GM23248 (cell line): ENCODE measurements at regions of chr2 and their contacts with region 1.

Region 1: DNA sequence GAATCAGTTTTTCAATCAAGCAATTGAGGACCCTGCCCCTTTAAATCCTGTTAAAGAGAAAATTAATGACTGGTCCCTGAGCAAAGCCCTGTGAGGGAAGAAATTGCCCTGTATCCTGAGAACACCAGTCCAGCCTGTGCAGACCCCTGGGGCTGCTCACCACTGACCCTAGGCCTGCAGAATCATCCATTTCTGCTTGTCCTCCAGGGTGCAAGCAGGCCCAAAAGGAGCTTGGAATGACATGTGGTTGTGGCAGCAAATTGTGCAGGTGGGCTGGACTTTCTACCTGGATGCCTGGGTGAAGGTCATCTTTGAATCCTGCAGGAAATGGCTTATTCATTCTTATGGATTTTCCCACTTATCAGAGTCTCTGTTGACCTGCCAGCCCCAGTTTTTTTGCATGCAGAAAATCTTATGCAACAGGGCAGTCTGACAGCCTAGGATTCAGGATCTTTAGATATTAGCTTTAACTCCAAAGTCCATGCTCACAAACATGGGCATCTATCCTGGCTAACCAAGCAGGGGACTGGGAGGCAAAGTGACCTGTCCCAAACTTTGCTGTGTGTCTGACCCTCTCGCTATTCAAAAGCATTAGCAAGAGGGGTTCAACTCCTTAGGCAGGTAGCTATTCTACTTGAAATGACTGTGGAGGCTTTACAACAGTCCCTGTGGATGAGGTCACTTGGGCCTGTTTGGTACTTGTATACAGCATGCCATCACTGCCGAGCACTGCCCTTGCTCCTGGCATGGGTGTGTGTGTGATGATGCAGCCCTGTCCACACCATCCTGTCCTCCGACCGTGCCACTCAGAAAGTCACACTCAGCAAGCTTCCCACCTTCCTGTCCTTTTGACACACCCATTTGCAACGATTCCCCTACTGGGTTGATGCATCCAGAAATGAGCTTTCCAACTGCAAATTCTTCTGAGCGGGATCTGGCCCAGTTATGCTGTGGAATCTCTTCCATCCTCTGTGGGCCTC is 85.3 kb downstream of the CAPN13 start:
- DNase-seq: no peak
- H3K4me3 ChIP-seq: no peak overlapping the region
- H3K27ac ChIP-seq: no peak overlapping the region
- H3K4me1 ChIP-seq: no peaks in the 10 kb centered on the region
- H3K27me3 ChIP-seq: peaks cover 30% of the 10 kb centered on the region

Region 2: DNA sequence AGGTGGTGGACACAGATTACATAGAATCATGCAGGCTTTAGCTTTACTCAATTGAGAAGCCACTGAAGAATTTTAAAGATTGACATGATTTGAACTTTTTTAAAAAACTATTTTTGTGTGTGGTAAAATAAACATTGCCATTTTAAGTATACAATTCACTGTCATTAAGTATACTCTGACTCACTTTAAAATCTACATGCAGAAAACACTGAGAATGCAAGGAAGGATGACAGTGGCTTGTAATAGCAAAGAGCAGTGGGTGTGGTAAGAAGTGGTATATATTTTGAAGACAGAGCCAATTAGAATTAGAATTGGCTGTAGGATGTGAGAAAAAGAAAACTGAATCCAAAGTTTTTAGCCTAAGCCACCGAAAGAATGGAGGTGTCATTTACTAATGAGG is 1866.8 kb before region 1 on chr2:
- in situ Hi-C with region 1: no loop called
- DNase-seq: no peak
- H3K4me3 ChIP-seq: no peak overlapping the region
- H3K27ac ChIP-seq: no peak overlapping the region
- H3K4me1 ChIP-seq: no peaks in the 10 kb centered on the region
- H3K27me3 ChIP-seq: no peaks in the 10 kb centered on the region

Region 3: DNA sequence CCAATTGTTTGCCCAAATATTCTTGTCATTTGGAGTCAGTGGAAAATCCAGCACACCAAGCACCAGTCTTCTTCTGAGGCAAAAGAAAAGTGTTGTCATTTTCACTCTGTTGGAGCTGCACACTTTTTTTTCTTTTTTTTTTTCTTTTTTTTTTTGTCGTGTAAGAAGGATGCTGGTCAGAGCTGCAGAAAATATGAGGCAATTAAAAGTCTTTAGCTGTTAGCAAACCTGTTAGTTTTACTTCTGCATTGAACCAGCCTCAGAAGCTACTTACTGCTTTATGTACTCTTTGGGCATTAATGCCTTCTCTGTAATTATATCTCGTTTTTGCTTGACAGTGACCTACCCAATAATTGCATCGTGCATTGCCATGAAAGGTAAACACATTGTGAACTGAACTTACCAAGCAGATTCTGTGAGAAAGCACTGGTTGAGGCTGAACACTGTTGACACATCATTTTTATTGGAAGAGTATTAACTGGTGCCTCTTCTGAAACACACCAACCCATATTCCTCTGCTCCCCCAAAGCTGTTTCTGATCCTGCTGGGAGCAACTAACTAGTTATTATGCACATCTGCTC is 80.1 kb before region 1 on chr2:
- in situ Hi-C with region 1: no loop called
- DNase-seq: no peak
- H3K4me3 ChIP-seq: no peak overlapping the region
- H3K27ac ChIP-seq: no peak overlapping the region
- H3K4me1 ChIP-seq: no peaks in the 10 kb centered on the region
- H3K27me3 ChIP-seq: no peaks in the 10 kb centered on the region

Region 4: DNA sequence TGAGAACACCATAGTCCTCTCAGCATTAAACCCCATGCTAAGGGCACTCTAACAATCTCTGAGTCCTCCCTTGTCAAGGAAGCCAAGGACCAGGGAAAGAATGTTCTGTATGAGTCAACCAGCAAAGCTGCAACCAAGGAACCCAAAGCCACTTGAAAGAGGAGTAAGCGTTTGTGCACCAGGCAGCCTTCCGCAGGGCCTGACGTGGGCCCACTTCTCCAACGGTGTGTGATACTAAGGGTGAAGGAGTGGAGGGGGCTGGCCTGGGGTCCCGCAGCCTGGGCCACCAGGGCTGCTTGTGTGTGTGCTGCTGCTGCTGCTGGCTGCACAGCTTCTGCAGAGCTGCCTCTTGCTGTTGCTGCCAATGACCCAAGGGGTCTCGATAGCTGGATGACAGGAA is 446.3 kb after region 1 on chr2:
- in situ Hi-C with region 1: loop called (anchors 10 kb)
- DNase-seq: peak; percentile 40
- H3K4me3 ChIP-seq: no peak overlapping the region
- H3K27ac ChIP-seq: no peak overlapping the region
- H3K4me1 ChIP-seq: no peaks in the 10 kb centered on the region
- H3K27me3 ChIP-seq: peaks cover 10% of the 10 kb centered on the region; the same call in 1 of the 2 replicates